Adrenal gland (tissue), 19 donors: ENCODE measurements at regions of chr19 and their contacts with region 1.

Region 1: GRCh38 chr19:12162882-12163806 is at the start of gene ZNF136:
- DNase-seq: peak; percentile 94 to 98 (median 96)
- H3K4me3 ChIP-seq: peak within 1 kb of the TSS; percentile 1 to 94 (median 84)
- H3K27ac ChIP-seq: peak within 1 kb of the TSS; percentile 88 to 98 (median 92)
- H3K4me1 ChIP-seq: peaks cover 13 to 32% of the 10 kb centered on the region in 2 donors
- H3K27me3 ChIP-seq: no peaks in the 10 kb centered on the region
- CTCF ChIP-seq: no peak
- POLR2A ChIP-seq: peak; percentile 85 to 93
- total RNA-seq, gene ZNF136: 5.8 to 19.8 (median 11.7) TPM

Region 2: DNA sequence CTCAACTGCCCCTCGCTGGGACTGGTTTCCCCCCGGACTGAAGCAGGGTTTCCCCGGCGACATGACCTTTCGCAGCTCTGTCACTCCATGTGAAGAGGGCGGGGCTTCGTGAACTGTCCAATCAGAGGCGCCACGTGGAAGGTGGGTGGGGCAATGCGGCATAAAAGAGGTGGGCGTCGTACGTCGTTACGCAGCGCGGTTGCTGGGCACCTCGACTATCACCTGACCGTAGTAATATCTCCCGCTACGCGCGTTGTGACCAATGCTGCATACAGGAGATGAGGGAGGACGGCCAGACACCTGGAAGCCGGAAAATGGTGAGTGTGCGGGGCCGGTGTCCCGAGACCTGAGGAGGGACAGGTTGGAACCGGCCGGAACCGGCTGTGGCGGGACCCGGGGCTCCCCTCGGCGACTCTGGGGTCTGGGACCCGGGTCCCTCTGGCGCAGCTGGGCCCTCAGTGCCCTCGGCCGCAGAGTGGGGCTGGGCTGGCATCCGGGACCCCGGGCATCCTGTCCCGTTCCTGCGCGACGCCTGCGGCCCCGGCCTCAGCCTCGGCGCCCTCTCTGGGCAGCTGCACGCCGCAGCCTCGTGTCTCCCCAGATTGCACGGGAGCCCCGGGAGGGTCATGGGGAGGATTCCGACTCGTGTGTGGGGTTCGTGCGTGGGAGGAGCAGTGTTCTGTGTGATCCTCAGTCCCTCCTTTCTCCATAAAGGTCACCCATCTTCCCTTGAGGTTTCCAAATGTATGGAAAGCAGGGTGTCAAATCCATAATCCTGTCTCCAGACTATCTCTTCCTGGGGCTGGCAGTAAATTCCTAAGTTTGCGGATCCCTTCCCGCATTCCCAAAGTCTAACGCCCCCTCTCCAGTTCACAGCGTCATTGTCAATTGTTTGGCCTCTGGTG is 31.9 kb after region 1 on chr19:
- intact Hi-C with region 1: no loop called
- DNase-seq: peak; percentile 81 to 94 (median 85)
- H3K4me3 ChIP-seq: peak overlapping the region in 2 of 4 donors; percentile 30 to 63
- H3K27ac ChIP-seq: peak overlapping the region in 4 of 5 donors; percentile 10 to 88 (median 61)
- H3K4me1 ChIP-seq: peaks cover 0 to 14% of the 10 kb centered on the region in 2 donors
- H3K27me3 ChIP-seq: no peaks in the 10 kb centered on the region
- CTCF ChIP-seq: no peak
- POLR2A ChIP-seq: peak; percentile 30 to 68

Region 3: DNA sequence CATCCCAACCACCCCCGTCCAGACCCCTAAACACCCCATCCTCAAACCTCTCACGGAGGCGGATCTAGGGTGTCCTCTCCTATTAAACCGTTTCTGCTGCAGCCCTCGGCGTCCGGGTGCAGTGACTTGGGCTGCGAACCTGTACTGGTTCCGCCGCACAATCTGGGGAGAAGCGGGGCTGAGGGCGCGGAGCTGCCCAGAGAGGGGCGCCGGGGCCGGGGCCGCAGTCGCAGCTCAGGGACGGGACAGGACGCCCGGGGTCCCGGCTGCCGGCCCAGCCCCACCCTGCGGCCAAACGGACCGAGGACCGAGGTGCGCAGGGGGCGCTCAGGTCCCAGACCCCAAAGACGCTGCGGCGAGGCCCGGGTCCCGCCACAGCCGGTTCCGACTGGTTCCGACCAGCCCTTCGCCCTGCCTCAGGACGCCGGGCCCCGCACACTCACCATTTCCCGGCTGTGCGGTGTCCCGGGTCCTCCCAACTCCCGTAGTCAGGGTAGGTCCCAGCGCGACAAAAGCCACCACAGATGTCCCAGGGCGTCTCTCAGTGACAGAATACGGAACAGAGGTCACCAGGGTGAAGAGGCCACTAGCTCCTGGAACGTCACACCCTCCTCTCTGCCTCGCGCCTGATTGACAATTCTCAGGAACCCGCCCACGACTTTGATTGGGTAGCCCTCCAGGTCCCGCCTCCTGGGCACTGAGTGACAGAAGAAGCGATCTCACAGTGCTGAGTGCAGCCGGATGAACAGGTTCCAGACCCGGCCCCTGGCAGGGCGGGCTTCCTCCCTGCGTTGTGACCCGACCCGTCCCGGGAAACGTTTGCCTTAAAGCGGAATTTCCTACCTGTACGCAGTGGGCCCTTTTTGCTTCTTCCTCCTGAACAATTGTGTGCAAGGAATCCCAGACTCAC is 131.4 kb after region 1 on chr19 and contains the start of gene ZNF44:
- intact Hi-C with region 1: loop called in 1 of 2 experiments (anchors 5 kb)
- DNase-seq: peak; percentile 99 to 100 (median 99)
- H3K4me3 ChIP-seq: peak within 1 kb of the TSS; percentile 68 to 92 (median 88)
- H3K27ac ChIP-seq: peak within 1 kb of the TSS; percentile 90 to 99 (median 98)
- H3K4me1 ChIP-seq: peaks cover 25 to 31% of the 10 kb centered on the region in 2 donors
- H3K27me3 ChIP-seq: no peaks in the 10 kb centered on the region
- CTCF ChIP-seq: no peak
- POLR2A ChIP-seq: peak; percentile 62 to 95
- total RNA-seq, gene ZNF44: 2.8 to 12.6 (median 10.4) TPM